ENCODE measurements at regions of chr16 and their contacts with region 1.

Region 1: GRCh38 chr16:54213322-54213721 is 73.3 kb downstream of the IRX3 start:
- DNase-seq: no peak
- H3K4me3 ChIP-seq: no peak overlapping the region
- H3K27me3 ChIP-seq: peaks cover 12% of the 10 kb centered on the region
- CTCF ChIP-seq: no peak

Region 2: GRCh38 chr16:54297154-54297553 is 83.8 kb after region 1 on chr16:
- CTCF ChIA-PET with region 1: no interaction called
- POLR2A ChIA-PET with region 1: no interaction called
- DNase-seq: no peak
- H3K4me3 ChIP-seq: no peak overlapping the region
- H3K27me3 ChIP-seq: no peaks in the 10 kb centered on the region
- CTCF ChIP-seq: no peak

Region 3: GRCh38 chr16:55370762-55371482 is 1157.6 kb after region 1 on chr16:
- CTCF ChIA-PET with region 1: no interaction called
- POLR2A ChIA-PET with region 1: interaction called, 13 read pairs
- DNase-seq: no peak
- H3K4me3 ChIP-seq: no peak overlapping the region
- H3K27me3 ChIP-seq: peaks cover 8% of the 10 kb centered on the region
- CTCF ChIP-seq: peak; percentile 57

Measured in BJ (cell line).